ENCODE measurements at regions of chr9 and their contacts with region 1.

Region 1: GRCh38 chr9:123225374-123225813 is 43.0 kb downstream of the STRBP start:
- DNase-seq: peak; percentile 47
- H3K4me3 ChIP-seq: no peak overlapping the region
- H3K27ac ChIP-seq: no peak overlapping the region
- H3K27me3 ChIP-seq: no peaks in the 10 kb centered on the region
- CTCF ChIP-seq: peak; percentile 69

Region 2: DNA sequence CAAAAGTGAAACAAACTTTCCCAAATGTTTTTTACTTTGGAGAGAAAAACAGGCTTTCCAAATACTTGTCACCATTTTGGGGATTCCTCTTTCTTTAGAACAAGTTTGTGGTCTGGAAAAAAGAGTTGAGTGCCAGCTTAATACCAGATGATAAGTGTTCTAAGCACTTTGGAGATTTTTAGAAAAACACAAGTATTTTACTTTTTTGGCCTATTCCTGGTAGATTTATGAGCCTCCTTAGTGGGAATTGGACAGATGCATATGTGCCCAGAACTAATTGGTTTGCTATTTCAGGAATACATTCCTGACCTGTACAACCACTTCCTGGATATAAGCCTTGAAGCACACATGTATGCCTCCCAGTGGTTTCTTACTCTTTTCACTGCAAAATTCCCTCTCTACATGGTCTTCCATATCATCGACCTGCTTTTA is 151.4 kb before region 1 on chr9:
- CTCF ChIA-PET with region 1: interaction called, 10 read pairs
- POLR2A ChIA-PET with region 1: no interaction called
- DNase-seq: peak; percentile 8
- H3K4me3 ChIP-seq: no peak overlapping the region
- H3K27ac ChIP-seq: peak overlapping the region; percentile 55
- H3K27me3 ChIP-seq: no peaks in the 10 kb centered on the region
- CTCF ChIP-seq: 0 out of 2 replicates have a peak, but pooled peaks have one; percentile 14

Region 3: GRCh38 chr9:123081824-123082223 is 143.6 kb before region 1 on chr9:
- CTCF ChIA-PET with region 1: interaction called, 64 read pairs
- POLR2A ChIA-PET with region 1: no interaction called
- DNase-seq: no peak
- H3K4me3 ChIP-seq: no peak overlapping the region
- H3K27ac ChIP-seq: no peak overlapping the region
- H3K27me3 ChIP-seq: no peaks in the 10 kb centered on the region
- CTCF ChIP-seq: peak; percentile 70

Measured in AG04450 (cell line).